A673 (cell line): ENCODE measurements at regions of chr18 and their contacts with region 1.

Region 1: DNA sequence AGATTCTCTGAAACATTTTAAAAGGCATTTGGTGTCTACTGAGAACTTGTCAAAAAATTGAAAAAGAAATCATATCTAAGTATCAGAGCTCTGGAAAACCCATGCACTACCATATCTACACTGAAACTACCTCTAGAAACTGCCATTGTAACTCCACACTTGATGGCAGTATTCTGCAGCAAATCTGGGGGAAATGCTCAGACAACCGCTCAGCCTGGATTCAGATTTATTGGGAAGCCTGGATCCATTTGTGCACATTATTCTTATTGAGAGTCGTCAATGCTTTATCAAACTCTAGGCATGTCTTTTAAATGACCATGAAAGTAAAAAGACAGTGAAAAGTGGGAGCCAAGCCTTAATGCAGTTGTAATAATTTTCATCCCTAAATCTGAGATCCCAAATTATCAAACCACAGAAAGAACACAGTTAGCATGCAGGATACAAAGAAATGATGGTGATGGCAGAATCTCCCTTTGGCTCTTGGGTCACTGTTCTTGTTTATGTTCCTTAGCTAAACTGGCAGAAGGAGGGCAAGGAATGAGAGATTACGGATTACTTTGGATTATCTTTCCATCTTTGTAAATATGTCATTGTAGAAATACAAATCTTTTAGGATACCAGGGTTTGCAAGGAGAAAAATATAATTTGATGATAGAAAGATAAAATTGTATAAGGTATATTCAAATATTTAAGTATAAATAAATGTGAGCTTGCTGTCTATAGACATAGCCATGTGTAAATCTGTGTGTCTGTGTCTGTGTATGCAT is 512.1 kb upstream of the SYT4 start:
- DNase-seq: peak; percentile 25
- H3K4me3 ChIP-seq: no peak overlapping the region
- H3K27ac ChIP-seq: no peak overlapping the region
- H3K4me1 ChIP-seq: no peaks in the 10 kb centered on the region
- H3K27me3 ChIP-seq: no peaks in the 10 kb centered on the region
- CTCF ChIP-seq: peak; percentile 52

Region 2: DNA sequence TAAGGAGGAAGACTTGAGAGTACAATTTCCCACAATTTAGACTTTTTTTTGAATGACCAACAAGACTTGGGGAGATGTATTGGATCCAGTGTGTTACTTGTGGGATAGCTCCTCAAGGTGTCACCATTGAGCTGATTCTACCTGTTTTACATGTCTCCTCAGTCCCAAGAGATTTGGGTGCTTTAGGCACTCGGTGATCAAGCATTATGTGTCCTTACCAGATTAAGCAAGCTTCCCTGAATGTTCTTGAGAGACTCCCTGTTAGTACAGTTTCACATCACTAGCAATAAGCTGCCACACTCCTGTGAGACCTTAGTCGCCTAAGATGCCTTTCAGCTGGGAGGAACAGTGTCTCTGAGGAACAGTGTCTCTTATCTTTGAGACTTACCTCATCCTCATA is 127.8 kb before region 1 on chr18:
- CTCF ChIA-PET with region 1: no interaction called
- POLR2A ChIA-PET with region 1: no interaction called
- intact Hi-C with region 1: no loop called
- DNase-seq: peak; percentile 62
- H3K4me3 ChIP-seq: no peak overlapping the region
- H3K27ac ChIP-seq: no peak overlapping the region
- H3K4me1 ChIP-seq: no peaks in the 10 kb centered on the region
- H3K27me3 ChIP-seq: no peaks in the 10 kb centered on the region
- CTCF ChIP-seq: peak; percentile 48

Region 3: GRCh38 chr18:43827311-43827710 is 37.9 kb after region 1 on chr18:
- CTCF ChIA-PET with region 1: no interaction called
- POLR2A ChIA-PET with region 1: no interaction called
- intact Hi-C with region 1: no loop called
- DNase-seq: no peak
- H3K4me3 ChIP-seq: no peak overlapping the region
- H3K27ac ChIP-seq: no peak overlapping the region
- H3K4me1 ChIP-seq: no peaks in the 10 kb centered on the region
- H3K27me3 ChIP-seq: no peaks in the 10 kb centered on the region
- CTCF ChIP-seq: no peak

Region 4: GRCh38 chr18:44098551-44099098 is 309.2 kb after region 1 on chr18:
- CTCF ChIA-PET with region 1: no interaction called
- POLR2A ChIA-PET with region 1: no interaction called
- intact Hi-C with region 1: loop called (anchors 10 kb)
- DNase-seq: peak; percentile 35
- H3K4me3 ChIP-seq: no peak overlapping the region
- H3K27ac ChIP-seq: no peak overlapping the region
- H3K4me1 ChIP-seq: no peaks in the 10 kb centered on the region
- H3K27me3 ChIP-seq: no peaks in the 10 kb centered on the region
- CTCF ChIP-seq: peak; percentile 38; the same call in 1 of the 2 replicates

Region 5: GRCh38 chr18:44325903-44326635 is 536.7 kb after region 1 on chr18:
- CTCF ChIA-PET with region 1: no interaction called
- POLR2A ChIA-PET with region 1: no interaction called
- intact Hi-C with region 1: loop called (anchors 5 kb)
- DNase-seq: peak; percentile 65
- H3K4me3 ChIP-seq: no peak overlapping the region
- H3K27ac ChIP-seq: no peak overlapping the region
- H3K4me1 ChIP-seq: no peaks in the 10 kb centered on the region
- H3K27me3 ChIP-seq: no peaks in the 10 kb centered on the region
- CTCF ChIP-seq: peak; percentile 70

Region 6: DNA sequence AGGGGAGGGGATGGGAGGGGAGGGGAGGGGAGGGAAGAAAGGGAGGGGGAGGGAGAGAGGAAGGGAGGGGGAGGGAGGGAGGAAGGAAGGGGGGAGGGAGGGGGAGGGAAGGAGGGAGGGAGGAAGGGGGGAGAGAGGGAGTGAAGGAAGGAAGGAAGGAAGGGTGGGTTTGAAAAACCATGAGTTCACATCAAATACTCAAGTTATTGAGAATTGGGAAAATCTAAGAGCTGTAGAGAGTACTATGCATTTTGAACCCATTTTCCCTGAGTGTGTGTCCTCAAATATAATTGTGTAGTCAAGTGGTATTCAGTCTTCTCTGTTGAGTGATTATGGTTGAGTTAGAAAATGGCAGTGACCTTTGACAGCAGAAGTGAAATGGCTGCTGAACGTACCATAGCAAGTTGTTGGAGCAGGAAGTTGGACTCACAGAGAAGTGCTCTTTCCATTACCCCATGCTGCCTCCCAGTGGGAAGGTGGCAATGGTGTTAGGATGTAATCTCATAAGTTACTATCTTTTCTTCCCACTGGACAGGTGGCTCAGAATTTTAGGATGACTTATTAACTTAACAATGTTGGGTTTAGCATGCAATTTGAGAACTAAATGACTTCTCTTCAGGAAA is 1105.9 kb after region 1 on chr18:
- CTCF ChIA-PET with region 1: no interaction called
- POLR2A ChIA-PET with region 1: no interaction called
- intact Hi-C with region 1: loop called (anchors 10 kb)
- DNase-seq: peak; percentile 67
- H3K4me3 ChIP-seq: no peak overlapping the region
- H3K27ac ChIP-seq: no peak overlapping the region
- H3K4me1 ChIP-seq: peaks cover 21% of the 10 kb centered on the region
- H3K27me3 ChIP-seq: no peaks in the 10 kb centered on the region
- CTCF ChIP-seq: peak; percentile 52

Region 7: GRCh38 chr18:45050712-45051601 is 1261.5 kb after region 1 on chr18:
- CTCF ChIA-PET with region 1: no interaction called
- POLR2A ChIA-PET with region 1: no interaction called
- intact Hi-C with region 1: no loop called
- DNase-seq: no peak
- H3K4me3 ChIP-seq: no peak overlapping the region
- H3K27ac ChIP-seq: no peak overlapping the region
- H3K4me1 ChIP-seq: peaks cover 3% of the 10 kb centered on the region
- H3K27me3 ChIP-seq: no peaks in the 10 kb centered on the region
- CTCF ChIP-seq: no peak